Activated naive CD4-positive, alpha-beta T cell treated with anti-CD3 and anti-CD28 coated beads for 36 hours (primary cell): ENCODE measurements at regions of chr2 and their contacts with region 1.

Region 1: DNA sequence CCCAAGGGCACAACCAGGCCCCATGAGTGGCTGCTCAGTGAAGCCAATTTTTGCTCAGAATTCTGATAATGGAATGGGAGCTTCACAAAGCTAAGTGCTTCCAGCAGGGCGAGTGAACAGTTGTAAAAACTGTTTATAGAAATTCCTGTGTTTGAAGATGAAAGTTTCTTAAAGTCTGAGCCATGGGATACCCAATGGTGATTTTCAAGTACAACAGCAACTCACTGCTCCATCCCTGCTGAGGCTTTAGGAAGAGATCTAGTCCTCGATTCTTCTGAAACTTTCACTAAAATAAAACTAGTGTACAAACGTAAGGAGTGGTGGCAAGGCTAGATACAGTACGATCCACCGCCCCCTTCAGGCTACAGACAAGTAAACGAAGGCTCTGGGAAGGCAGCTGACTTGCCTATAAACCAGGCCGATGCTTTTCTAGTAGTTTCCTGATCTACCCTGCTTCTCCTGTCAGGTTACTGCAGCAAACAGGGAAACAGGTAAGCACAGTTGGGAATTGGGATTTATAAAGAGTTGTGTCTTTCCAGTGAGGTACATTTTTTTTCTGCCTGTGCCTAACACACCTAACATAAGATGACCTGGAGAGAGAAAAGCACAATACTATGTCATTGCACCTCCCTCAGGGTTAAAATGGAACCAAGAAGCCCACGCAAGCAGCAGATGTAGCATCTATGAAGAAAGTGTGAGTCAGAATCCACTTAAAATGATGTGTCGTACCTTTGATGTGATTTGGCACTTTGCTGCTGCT is 108.7 kb downstream of the UXS1 start:
- DNase-seq: peak; percentile 84
- H3K4me3 Mint-ChIP-seq: peak overlapping the region; percentile 72
- H3K27ac Mint-ChIP-seq: peak overlapping the region; percentile 94
- H3K4me1 Mint-ChIP-seq: peaks cover 65% of the 10 kb centered on the region
- H3K27me3 Mint-ChIP-seq: no peaks in the 10 kb centered on the region

Region 2: GRCh38 chr2:105582952-105583660 is 502.3 kb before region 1 on chr2:
- CTCF ChIA-PET with region 1: interaction called, 21 read pairs
- intact Hi-C with region 1: loop called (anchors 1 kb)
- DNase-seq: peak; percentile 12
- H3K4me3 Mint-ChIP-seq: no peak overlapping the region
- H3K27ac Mint-ChIP-seq: no peak overlapping the region
- H3K4me1 Mint-ChIP-seq: peaks cover 33% of the 10 kb centered on the region
- H3K27me3 Mint-ChIP-seq: no peaks in the 10 kb centered on the region

Region 3: DNA sequence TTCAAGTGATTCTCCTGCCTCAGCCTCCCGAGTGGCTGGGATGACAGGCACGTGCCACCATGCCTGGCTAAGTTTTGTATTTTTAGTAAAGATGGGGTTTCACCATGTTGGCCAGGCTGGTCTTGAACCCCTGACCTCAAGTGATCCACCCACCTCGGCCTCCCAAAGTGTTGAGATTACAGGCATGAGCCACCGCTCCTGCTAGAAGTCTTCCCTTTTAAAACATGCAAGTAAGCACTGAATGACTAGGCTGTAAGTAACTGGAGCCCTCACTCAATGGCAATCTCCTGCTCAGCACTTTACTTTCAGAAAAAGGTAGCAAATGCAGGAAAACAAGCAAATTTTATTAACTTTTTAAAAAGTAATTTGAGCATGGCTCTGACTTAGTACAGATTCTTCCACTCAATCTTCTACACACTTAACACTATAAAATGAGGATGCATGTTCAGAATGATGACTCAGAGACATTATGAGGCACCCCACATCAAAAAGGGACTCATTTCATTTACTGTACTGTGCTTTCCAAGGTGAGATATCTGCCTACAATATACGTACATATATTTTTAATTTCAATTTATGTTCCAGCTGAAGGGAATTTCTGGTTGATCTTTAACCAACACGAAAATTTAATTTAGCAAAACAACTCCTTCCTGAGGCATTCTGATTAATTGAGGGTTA is 347.2 kb before region 1 on chr2:
- CTCF ChIA-PET with region 1: interaction called, 3 read pairs
- intact Hi-C with region 1: loop called (anchors 2 kb)
- DNase-seq: peak; percentile 45
- H3K4me3 Mint-ChIP-seq: peak overlapping the region; percentile 69
- H3K27ac Mint-ChIP-seq: peak overlapping the region; percentile 97
- H3K4me1 Mint-ChIP-seq: peaks cover 71% of the 10 kb centered on the region
- H3K27me3 Mint-ChIP-seq: no peaks in the 10 kb centered on the region

Region 4: DNA sequence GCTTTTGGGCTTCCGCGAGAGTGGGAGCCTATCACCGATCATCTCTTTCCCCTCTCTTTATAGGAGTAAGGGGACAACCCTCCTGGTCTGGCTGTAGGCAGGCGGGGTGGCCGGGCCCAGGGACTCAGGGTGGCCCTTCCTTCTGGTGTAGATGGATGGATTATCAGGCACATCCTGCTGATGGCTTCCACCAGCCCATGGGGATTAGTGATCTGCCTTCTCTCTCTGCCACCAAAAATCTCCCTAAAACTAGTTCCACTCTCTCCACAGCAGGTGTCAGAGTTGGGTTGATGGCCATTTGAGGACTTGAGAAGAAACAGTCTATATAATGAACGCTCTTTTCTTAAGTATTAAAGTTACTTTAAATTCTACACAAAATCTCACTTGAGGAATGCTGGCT is 303.2 kb before region 1 on chr2:
- CTCF ChIA-PET with region 1: interaction called, 4 read pairs
- intact Hi-C with region 1: loop called (anchors 1 kb)
- DNase-seq: no peak
- H3K4me3 Mint-ChIP-seq: peak overlapping the region; percentile 36
- H3K27ac Mint-ChIP-seq: peak overlapping the region; percentile 61
- H3K4me1 Mint-ChIP-seq: peaks cover 91% of the 10 kb centered on the region
- H3K27me3 Mint-ChIP-seq: no peaks in the 10 kb centered on the region

Region 5: GRCh38 chr2:105858868-105859693 is 226.3 kb before region 1 on chr2:
- CTCF ChIA-PET with region 1: no interaction called
- intact Hi-C with region 1: loop called (anchors 1 kb)
- DNase-seq: peak; percentile 46
- H3K4me3 Mint-ChIP-seq: no peak overlapping the region
- H3K27ac Mint-ChIP-seq: peak overlapping the region; percentile 91
- H3K4me1 Mint-ChIP-seq: peaks cover 93% of the 10 kb centered on the region
- H3K27me3 Mint-ChIP-seq: no peaks in the 10 kb centered on the region

Region 6: GRCh38 chr2:105934467-105934866 is 150.9 kb before region 1 on chr2:
- CTCF ChIA-PET with region 1: no interaction called
- intact Hi-C with region 1: loop called (anchors 1 kb)
- DNase-seq: peak; percentile 61
- H3K4me3 Mint-ChIP-seq: peak overlapping the region; percentile 20
- H3K27ac Mint-ChIP-seq: no peak overlapping the region
- H3K4me1 Mint-ChIP-seq: peaks cover 28% of the 10 kb centered on the region
- H3K27me3 Mint-ChIP-seq: no peaks in the 10 kb centered on the region

Region 7: DNA sequence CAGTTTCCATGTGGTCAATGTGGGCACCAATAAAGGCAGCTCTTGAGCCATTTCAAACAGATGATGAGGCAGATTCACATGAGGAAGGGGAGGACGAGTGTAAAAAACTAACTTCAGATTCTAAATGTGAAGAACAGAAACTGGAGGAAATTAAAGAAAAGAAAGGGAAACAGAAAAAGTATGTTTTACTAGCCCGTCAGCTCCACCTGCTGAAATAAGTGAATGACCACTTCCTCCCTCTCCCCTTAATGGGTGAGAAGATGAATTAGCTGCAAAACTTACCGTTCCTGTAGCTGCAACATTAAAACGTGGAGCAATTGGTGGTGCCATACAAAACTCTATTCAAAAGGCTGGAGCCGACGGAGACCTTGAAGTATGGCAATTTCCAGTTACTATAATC is 94.7 kb before region 1 on chr2:
- CTCF ChIA-PET with region 1: no interaction called
- intact Hi-C with region 1: no loop called
- DNase-seq: no peak
- H3K4me3 Mint-ChIP-seq: no peak overlapping the region
- H3K27ac Mint-ChIP-seq: no peak overlapping the region
- H3K4me1 Mint-ChIP-seq: peaks cover 34% of the 10 kb centered on the region
- H3K27me3 Mint-ChIP-seq: no peaks in the 10 kb centered on the region